ENCODE measurements at regions of chr1 and their contacts with region 1.

Region 1: GRCh38 chr1:21659099-21659923 is 9.8 kb downstream of the RAP1GAP start:
- DNase-seq: peak in 1 of 2 donors; percentile 73
- ATAC-seq: peak; percentile 90

Region 2: DNA sequence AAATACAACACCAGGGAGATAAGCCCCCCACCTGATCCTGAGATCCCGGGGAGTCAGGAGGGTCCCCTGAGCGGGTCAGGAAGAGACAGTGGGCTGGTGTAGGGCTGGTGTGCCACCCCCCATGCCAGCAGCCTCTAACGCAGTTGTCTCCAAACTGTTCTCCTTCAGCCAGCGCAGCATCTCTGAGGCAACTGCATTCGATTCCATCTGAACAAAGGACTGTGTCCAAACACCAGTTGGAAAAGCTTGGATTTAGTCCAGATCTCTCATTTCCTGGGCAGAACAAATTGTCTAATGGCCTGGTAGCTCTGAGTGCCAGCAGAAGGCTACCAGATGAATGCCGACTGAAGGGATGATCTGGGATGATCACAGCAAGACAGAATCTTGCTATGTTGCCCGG is 438.5 kb before region 1 on chr1:
- intact Hi-C with region 1: loop called in 1 of 2 experiments (anchors 10 kb)
- DNase-seq: no peak
- ATAC-seq: no peak

Region 3: DNA sequence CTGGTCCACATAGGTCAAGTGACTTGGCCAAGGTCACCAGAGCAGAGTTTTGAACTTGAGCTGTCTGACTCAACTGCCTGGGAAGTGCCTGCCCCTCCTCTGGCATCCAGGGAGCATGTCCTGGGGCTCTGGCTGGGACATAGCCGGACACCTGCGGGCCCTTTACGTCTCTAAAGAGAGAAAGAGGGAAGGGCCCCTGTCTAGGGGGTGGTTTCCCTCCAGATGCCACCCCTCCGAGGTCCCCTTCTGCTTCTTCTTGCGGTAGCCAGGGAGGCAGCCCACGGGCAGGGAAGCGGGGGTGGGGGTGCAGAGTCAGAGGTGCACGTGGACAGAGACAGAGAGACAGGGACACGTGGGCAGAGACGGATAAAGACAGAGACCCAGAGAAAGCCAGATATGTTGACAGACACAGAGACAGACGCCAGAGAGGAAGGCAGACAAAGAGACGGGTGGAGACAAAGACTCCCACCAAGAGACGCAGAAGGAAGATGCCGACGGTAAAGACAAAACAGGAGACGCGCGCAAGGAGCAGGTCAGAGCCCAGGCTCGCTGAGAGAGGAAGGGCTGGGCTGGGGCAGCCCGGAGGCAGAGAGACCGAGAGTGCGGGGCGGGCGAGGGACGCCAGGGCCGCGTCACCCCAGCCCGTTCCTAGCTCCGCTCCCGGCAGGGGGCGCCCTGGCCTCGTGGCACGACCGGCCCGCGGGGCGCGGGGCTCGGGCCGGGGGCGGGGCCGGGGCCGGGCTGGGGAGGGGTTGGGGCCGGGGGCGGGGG is 150.5 kb before region 1 on chr1:
- intact Hi-C with region 1: loop called in 1 of 2 experiments (anchors 2 kb)
- DNase-seq: peak in 1 of 2 donors; percentile 84
- ATAC-seq: peak; percentile 87

Measured in left colon (tissue), 2 donors.